Activated CD4-positive, alpha-beta T cell treated with anti-CD3 and anti-CD28 coated beads for 36 hours (primary cell): ENCODE measurements at regions of chr11 and their contacts with region 1.

Region 1: DNA sequence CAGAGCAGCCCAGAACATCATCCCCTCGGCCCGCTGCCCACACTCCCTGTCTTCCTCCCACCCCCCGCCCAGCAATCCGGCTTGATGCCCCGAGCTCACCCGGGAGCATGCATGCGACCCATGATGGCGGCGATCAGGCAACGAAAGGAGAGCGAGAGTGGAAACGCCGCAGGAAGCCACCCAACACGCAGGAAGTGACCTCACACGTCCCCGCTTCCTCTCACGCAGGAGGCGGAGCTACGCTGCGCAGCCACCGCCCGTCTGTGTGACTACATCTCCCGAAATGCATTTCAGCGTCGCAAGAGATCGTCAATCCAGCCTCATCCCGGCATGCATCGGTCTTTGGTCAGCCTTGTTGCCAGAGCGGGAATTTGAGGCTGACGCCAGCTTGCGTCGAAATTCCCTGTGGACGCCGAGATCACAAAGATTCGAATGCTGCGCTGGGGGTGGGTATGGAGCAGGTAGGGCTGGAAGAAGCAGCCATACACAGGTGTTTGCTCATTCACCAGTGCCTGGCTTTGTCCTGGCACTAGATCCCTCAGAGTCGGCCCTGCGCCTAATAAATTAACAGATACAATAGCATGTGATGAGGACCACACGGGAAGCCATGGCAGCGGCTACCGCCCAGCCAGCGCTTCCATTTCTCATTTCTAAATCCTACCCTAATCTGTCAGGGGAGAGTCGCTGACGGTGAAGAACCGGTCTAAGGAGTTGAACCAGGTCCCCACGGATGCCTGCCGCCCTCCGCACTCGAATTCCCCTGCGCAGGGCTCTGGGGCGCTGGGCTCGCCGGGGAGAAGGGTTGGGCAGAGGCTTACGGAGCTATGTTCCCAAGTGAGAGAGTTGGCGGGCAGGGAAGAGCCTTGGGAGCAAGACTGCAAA is at the start of gene RPS13:
- DNase-seq: peak; percentile 97
- ATAC-seq: peak; percentile 97
- H3K4me3 Mint-ChIP-seq: peak within 1 kb of the TSS; percentile 100
- H3K27ac Mint-ChIP-seq: peak within 1 kb of the TSS; percentile 98
- H3K4me1 Mint-ChIP-seq: peaks cover 30% of the 10 kb centered on the region
- H3K27me3 Mint-ChIP-seq: no peaks in the 10 kb centered on the region
- total RNA-seq, gene RPS13: 1,242 to 1,685 TPM

Region 2: GRCh38 chr11:16820324-16821092 is 257.3 kb before region 1 on chr11:
- CTCF ChIA-PET with region 1: interaction called, 12 read pairs
- POLR2A ChIA-PET with region 1: interaction called, 9 read pairs
- intact Hi-C with region 1: no loop called
- DNase-seq: peak; percentile 90
- ATAC-seq: peak; percentile 94
- H3K4me3 Mint-ChIP-seq: no peak overlapping the region
- H3K27ac Mint-ChIP-seq: no peak overlapping the region
- H3K4me1 Mint-ChIP-seq: peaks cover 4% of the 10 kb centered on the region
- H3K27me3 Mint-ChIP-seq: no peaks in the 10 kb centered on the region

Region 3: GRCh38 chr11:17014838-17015626 is 62.7 kb before region 1 on chr11:
- CTCF ChIA-PET with region 1: no interaction called
- POLR2A ChIA-PET with region 1: interaction called, 3 read pairs
- intact Hi-C with region 1: loop called in 1 of 2 experiments (anchors 2 kb)
- DNase-seq: peak; percentile 55
- ATAC-seq: peak; percentile 72
- H3K4me3 Mint-ChIP-seq: peak overlapping the region; percentile 77
- H3K27ac Mint-ChIP-seq: peak overlapping the region; percentile 66
- H3K4me1 Mint-ChIP-seq: peaks cover 7% of the 10 kb centered on the region
- H3K27me3 Mint-ChIP-seq: peaks cover 12% of the 10 kb centered on the region

Region 4: DNA sequence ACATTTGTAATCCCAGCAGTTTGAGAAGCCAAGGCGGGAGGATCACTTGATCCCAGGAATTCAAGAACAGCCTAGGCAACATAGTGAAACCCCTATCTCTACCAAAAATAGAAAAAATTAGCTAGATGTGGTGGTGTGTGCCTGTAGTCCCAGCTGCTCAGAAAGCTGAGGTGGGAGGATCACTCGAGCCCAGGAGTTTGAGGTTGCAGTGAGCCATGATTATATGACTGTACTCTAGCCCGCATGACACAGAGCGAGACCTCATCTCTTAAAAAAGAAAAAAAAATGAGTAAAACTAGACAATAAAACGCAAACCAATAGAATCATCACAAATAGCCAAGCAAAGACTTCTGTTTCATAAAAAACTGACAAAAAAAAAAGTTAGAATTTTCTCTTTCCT is 220.5 kb after region 1 on chr11:
- CTCF ChIA-PET with region 1: no interaction called
- POLR2A ChIA-PET with region 1: no interaction called
- intact Hi-C with region 1: loop called in 1 of 2 experiments (anchors 5 kb)
- DNase-seq: peak; percentile 83
- ATAC-seq: peak; percentile 82
- H3K4me3 Mint-ChIP-seq: no peak overlapping the region
- H3K27ac Mint-ChIP-seq: no peak overlapping the region
- H3K4me1 Mint-ChIP-seq: peaks cover 40% of the 10 kb centered on the region
- H3K27me3 Mint-ChIP-seq: no peaks in the 10 kb centered on the region

Region 5: DNA sequence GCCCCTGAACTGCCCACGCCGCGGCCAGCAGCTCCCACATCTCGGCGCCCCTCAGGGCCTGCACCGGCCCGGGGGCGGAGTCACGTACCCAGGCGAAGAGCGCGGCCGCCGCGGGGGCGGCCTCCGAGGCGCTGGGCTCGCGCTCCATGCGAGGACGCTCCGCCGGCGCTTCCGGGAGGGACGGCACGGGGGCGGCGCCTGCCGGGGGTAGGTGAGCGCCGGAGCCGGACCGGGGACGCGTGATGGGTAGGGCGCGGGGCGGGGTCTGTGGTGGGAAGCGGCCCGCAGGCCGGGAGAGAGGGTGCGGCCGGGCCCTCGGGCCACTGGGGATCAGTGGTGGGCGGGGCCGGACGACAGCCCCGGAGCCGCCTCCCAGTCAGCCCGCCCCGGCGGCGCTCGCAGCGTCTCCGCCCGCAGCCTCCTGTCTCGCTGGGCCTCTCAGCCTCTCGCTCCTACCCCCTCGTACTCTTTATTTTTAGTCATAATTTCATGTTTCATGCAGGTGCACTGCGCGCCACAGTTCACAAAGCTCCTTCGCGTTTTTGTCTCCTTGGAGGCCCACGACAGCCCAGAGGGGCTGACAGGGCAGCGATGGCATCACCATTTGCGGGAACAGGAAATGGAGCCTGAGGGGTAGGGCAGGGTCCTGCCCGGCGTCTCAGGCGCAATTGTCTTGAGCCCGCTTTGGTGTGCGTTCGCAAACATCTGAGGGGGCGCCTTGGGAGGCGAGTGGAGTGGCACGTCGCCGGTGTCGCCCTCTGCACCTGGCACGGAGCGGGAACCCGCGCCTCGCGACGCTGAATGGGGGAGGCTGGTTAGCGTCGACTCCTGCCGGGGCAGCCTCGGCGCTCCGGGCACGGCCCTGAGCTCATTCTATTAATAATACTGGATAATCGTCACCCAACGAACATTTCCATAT is 935.4 kb after region 1 on chr11 and contains the start of gene SERGEF:
- CTCF ChIA-PET with region 1: no interaction called
- POLR2A ChIA-PET with region 1: no interaction called
- intact Hi-C with region 1: loop called in 1 of 2 experiments (anchors 5 kb)
- DNase-seq: peak; percentile 96
- ATAC-seq: peak; percentile 93
- H3K4me3 Mint-ChIP-seq: peak within 1 kb of the TSS; percentile 85
- H3K27ac Mint-ChIP-seq: peak within 1 kb of the TSS; percentile 98
- H3K4me1 Mint-ChIP-seq: peaks cover 39% of the 10 kb centered on the region
- H3K27me3 Mint-ChIP-seq: no peaks in the 10 kb centered on the region
- total RNA-seq, gene SERGEF: 47.5 to 57.5 TPM

Region 6: DNA sequence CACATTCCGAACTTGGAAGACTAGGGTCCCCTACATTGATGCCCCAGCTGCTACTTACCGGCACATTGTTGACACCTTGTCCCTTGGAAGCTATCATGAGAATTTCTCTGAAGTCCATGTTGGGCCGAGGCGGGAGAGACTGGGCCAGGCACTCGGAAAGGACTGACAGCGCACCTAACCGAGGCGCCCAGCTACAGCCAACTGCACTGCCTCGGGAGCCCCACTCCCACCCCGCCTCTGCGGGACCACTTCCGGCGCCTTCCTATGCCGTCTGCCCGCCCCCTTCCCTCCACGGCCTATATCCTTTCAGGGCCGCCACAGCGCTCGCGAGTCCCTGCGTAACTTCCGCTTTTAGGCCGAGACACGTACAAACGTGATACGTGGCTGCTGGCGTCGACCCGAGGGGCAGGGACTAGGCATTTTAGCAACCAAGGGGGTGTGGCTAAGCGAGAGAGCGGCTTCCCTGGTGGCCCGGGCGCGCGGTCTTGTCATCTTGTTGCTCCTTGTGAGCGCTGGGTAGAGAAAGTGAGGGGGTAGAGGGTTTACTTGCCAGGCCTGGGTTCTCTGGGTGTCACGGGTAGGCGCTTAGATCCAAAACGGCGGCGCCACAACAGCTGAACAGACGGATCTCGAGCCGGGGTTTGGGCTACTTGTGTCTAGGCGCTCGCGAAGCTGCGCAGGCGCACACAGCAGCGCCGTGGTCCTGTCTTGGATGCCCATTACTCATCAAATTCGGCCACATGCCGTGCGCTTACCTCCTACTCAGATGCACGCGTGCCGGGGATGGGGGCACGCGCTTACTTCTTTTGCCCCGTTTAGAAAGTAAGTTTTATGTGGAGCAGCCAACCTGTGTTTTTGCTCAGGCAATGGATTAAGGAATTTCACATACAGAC is 1556.6 kb after region 1 on chr11 and contains the start of gene SPTY2D1:
- CTCF ChIA-PET with region 1: no interaction called
- POLR2A ChIA-PET with region 1: no interaction called
- intact Hi-C with region 1: loop called in 1 of 2 experiments (anchors 5 kb)
- DNase-seq: peak; percentile 99
- ATAC-seq: peak; percentile 98
- H3K4me3 Mint-ChIP-seq: peak within 1 kb of the TSS; percentile 83
- H3K27ac Mint-ChIP-seq: peak within 1 kb of the TSS; percentile 95
- H3K4me1 Mint-ChIP-seq: peaks cover 21% of the 10 kb centered on the region
- H3K27me3 Mint-ChIP-seq: no peaks in the 10 kb centered on the region
- total RNA-seq, gene SPTY2D1: 17.8 to 26.4 TPM